ENCODE measurements at regions of chr11 and their contacts with region 1.

Region 1: GRCh38 chr11:120952461-120953434 is 71.2 kb upstream of the TBCEL start:
- DNase-seq: peak; percentile 73
- ATAC-seq: peak; percentile 90 to 93

Region 2: GRCh38 chr11:120682866-120683265 is 269.9 kb before region 1 on chr11:
- intact Hi-C with region 1: loop called in 1 of 2 experiments (anchors 10 kb)
- DNase-seq: no peak
- ATAC-seq: no peak

Region 3: DNA sequence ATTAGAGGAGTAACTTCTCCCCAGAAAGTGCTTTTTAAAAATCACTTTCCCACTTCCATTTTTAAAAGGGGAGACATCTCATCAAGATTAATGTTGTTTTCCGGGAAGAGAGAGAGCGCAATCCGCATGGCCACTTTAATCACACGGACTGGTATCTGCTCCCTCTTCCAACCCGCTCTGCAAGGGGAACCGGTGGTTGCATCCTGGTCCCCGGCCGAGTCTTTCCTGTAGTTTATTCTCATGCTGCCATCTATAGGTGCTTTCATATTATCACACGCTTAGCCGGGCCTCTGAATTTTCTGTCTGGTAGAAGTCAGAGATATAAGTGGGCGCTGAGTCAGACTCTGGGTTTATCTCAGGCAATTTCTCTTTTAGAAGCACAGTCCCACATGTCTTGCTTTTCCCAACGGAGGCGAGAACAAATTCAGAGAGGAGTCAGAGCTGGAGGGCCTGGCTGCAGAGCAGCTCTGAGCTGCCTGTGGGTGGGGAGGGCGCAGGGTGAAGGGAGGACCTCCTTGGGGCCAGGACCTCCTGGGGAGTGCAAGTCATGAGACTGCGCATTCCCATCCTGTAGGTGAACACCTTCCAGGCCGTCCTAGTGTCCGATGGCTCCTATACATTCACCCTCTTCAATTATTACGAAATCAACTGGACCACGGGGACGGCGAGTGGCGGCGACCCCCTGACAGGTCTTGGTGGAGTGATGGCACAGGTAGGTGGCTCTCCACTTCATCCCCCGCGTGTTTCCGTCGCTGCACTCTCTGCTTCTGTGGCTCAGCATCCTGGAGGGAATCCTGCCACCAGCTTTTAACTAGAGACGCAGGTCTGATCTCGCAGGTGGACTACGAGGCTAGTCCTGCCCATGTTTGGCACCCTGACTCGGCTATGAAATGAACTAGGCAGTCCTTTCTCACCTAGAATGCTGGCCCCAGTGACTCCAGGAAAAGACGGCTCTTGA is 160.0 kb after region 1 on chr11:
- intact Hi-C with region 1: loop called in 1 of 2 experiments (anchors 10 kb)
- DNase-seq: peak; percentile 77
- ATAC-seq: peak; percentile 84 to 95